ENCODE measurements at regions of chr5 and their contacts with region 1.

Region 1: DNA sequence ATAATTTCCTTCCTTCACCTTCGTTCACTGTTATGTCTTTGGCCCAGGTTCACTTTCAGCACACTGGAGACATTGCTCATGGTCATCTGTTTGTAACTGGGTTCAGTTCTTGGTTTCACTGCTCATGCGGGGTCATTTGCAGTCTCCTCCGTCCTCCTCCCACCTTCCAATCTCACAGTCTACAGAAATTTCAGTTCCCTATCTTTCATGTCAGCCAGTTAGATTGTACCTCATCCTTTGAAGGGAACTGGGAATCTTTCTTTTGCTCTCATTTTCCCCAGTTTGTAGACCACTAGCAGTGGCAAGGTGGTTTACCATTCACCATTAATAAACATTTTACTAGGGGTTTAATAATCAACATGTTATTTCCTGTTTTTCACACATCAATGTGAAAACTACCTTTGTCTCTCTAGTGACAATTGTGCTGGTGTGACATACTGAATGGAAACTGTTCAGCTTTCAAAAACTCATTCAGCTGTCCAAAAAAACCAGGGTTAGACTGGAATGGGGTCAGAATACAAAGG is 100.9 kb upstream of the IL6ST start:
- DNase-seq: no peak
- H3K4me3 Mint-ChIP-seq: no peak overlapping the region
- H3K27ac Mint-ChIP-seq: no peak overlapping the region
- H3K4me1 Mint-ChIP-seq: peaks cover 53% of the 10 kb centered on the region
- H3K27me3 Mint-ChIP-seq: no peaks in the 10 kb centered on the region

Region 2: GRCh38 chr5:56080375-56081052 is 15.1 kb before region 1 on chr5:
- intact Hi-C with region 1: loop called (anchors 1 kb)
- DNase-seq: no peak
- H3K4me3 Mint-ChIP-seq: no peak overlapping the region
- H3K27ac Mint-ChIP-seq: peak overlapping the region; percentile 0
- H3K4me1 Mint-ChIP-seq: peaks cover 31% of the 10 kb centered on the region
- H3K27me3 Mint-ChIP-seq: peaks cover 3% of the 10 kb centered on the region

Region 3: DNA sequence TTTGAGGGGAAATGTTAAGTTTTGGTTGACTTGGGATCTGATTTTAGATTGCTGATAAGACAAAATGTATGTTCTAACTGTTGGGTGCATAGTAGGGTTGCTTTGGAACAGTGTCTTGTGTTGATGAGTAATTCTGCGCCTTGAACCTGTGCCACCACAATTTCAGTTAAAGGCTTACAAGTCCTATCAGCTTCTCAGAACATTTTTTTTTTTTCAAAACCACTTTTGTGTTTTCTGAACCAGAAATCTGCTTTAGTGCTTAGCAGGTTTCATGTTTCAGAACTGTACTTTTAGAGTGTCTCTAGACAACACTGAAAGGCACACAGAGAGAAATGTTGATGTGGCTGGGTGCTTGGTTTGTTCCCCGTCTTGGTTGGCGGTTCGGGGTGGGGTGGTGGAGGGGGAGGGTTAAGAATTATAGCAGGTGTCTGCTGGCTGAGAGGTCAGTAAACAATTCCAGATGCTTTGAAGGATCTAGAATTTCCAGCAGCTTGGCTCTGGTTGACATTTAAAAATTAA is 52.9 kb after region 1 on chr5:
- intact Hi-C with region 1: loop called (anchors 2 kb)
- DNase-seq: peak; percentile 59
- H3K4me3 Mint-ChIP-seq: no peak overlapping the region
- H3K27ac Mint-ChIP-seq: peak overlapping the region; percentile 54
- H3K4me1 Mint-ChIP-seq: peaks cover 54% of the 10 kb centered on the region
- H3K27me3 Mint-ChIP-seq: no peaks in the 10 kb centered on the region

Region 4: GRCh38 chr5:56175488-56175887 is 79.8 kb after region 1 on chr5:
- intact Hi-C with region 1: no loop called
- DNase-seq: no peak
- H3K4me3 Mint-ChIP-seq: no peak overlapping the region
- H3K27ac Mint-ChIP-seq: no peak overlapping the region
- H3K4me1 Mint-ChIP-seq: peaks cover 16% of the 10 kb centered on the region
- H3K27me3 Mint-ChIP-seq: peaks cover 31% of the 10 kb centered on the region